Endothelial cell of umbilical vein (primary cell): ENCODE measurements at regions of chr2 and their contacts with region 1.

Region 1: DNA sequence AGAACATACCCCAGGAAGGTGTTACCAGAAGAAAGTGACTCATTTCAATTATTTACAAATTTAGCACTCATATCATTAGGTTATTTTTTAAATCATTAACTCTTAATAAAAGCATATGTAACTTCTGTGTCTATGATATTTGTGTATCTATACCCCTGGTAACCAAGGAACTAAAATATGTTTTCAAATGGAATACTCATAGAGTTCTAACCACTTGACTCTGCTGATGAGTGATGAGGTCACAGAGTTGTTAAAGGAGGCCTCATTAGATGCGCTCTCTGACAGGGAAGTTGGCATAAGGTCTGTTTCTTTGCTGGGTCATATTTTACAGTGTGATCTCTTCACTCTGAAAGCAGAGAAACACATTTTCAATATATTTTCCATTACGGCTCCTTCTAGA is 73.4 kb downstream of the CCDC150 start:
- DNase-seq: no peak
- H3K4me3 ChIP-seq: no peak overlapping the region
- H3K27ac ChIP-seq: no peak overlapping the region
- H3K4me1 ChIP-seq: no peaks in the 10 kb centered on the region
- H3K27me3 ChIP-seq: no peaks in the 10 kb centered on the region
- CTCF ChIP-seq: no peak
- POLR2A ChIP-seq: no peak

Region 2: DNA sequence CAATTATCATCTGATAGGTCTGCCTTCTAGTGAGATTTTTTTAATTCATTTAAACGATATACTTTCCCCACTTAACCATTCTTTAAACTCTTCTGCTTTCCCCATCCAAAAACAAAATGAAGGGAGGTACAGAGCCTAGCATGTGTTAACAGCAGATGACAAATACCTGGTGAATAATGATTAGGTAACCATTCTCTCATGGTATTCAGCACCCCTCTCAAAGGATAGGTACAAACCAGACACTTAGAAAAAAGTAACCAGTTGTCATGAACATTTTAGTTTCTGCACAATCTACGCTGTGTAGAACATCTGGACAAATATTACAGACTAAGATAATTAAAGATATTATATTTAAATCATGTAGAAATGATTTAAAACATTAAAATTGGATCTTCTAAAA is 700.6 kb before region 1 on chr2:
- CTCF ChIA-PET with region 1: no interaction called
- POLR2A ChIA-PET with region 1: no interaction called
- dilution Hi-C with region 1: no loop called
- intact Hi-C with region 1: no loop called
- DNase-seq: no peak
- H3K4me3 ChIP-seq: no peak overlapping the region
- H3K27ac ChIP-seq: no peak overlapping the region
- H3K4me1 ChIP-seq: no peaks in the 10 kb centered on the region
- H3K27me3 ChIP-seq: peaks cover 0 to 3% of the 10 kb centered on the region in 2 experiments
- CTCF ChIP-seq: no peak
- POLR2A ChIP-seq: no peak

Region 3: DNA sequence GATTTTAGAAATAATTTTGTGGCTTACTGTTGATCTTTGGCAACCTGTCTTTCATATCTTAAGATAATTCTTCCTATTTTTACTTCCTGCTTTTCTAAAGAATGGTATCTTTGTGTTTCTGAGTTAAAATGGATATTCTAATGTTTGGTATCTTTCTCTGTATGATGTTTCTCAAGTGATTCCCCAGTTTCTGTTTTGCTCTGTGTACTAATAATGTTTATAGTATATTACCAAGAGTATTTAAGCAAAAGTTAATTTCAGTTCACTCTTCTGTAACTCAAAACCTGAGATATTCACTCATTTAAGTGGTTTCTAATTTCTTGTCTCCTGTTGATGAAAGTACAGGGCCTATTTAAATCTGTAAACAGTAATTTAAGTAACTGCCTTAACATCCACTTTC is 15.0 kb before region 1 on chr2:
- CTCF ChIA-PET with region 1: no interaction called
- POLR2A ChIA-PET with region 1: no interaction called
- dilution Hi-C with region 1: no loop called
- intact Hi-C with region 1: loop called (anchors 2 kb)
- DNase-seq: no peak
- H3K4me3 ChIP-seq: no peak overlapping the region
- H3K27ac ChIP-seq: no peak overlapping the region
- H3K4me1 ChIP-seq: no peaks in the 10 kb centered on the region
- H3K27me3 ChIP-seq: no peaks in the 10 kb centered on the region
- CTCF ChIP-seq: no peak
- POLR2A ChIP-seq: no peak